ENCODE measurements at regions of chr12 and their contacts with region 1.

Region 1: GRCh38 chr12:60014436-60014835 is 418.6 kb downstream of the SLC16A7 start:
- DNase-seq: no peak
- ATAC-seq: no peak
- H3K4me3 ChIP-seq: no peak overlapping the region
- H3K27ac ChIP-seq: no peak overlapping the region
- H3K4me1 ChIP-seq: no peaks in the 10 kb centered on the region
- H3K27me3 ChIP-seq: no peaks in the 10 kb centered on the region
- CTCF ChIP-seq: no peak
- POLR2A ChIP-seq: no peak

Region 2: DNA sequence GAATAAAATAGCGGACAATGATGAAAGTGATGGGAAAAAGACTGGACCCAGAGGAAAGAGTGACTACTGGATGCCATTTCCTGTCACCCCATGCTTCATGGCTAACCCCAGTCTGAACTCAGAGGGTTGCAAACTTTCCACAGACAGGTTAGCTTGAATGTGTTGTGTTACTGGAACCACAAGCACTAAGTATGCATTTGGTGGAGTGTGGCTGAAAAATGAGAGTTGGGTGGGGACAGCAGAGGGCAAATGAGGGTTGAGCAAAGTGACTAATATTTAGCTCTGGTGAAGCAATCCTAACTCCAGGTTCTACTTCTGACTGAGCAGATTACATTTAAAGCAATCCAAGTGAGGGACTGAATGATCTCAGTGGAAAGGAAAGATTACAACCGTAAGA is 417.1 kb before region 1 on chr12:
- intact Hi-C with region 1: no loop called
- DNase-seq: peak in 3 of 5 donors; percentile 28 to 43 (median 33)
- ATAC-seq: peak; percentile 55 to 71 (median 62)
- H3K4me3 ChIP-seq: peak overlapping the region in 11 of 12 donors; percentile 16 to 87 (median 69)
- H3K27ac ChIP-seq: peak overlapping the region; percentile 80 to 98 (median 97)
- H3K4me1 ChIP-seq: peaks cover 0 to 49% (median 21%) of the 10 kb centered on the region in 12 donors
- H3K27me3 ChIP-seq: no peaks in the 10 kb centered on the region
- CTCF ChIP-seq: peak in 1 of 12 donors; percentile 16
- POLR2A ChIP-seq: no peak

Region 3: DNA sequence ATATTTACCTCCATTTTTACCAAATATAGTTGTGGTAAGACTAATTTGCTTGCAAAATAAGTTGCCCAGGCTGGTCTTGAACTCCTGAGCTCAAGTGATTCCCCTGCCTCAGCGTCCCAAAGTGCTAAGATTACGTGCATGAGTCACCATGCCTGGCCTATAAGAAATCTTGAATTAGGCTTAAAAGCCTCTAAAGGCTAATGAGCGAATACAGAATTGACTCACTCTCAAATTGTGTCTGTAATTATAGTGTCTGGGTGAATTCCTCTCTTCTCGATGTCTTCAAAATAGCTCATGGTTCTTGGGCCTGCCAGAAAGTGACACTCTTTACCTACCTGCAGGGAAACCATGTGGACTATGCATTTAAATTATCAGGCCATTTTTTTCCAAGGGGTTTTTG is 15.1 kb before region 1 on chr12:
- intact Hi-C with region 1: loop called in 1 of 10 experiments (anchors 2 kb)
- DNase-seq: no peak
- ATAC-seq: no peak
- H3K4me3 ChIP-seq: no peak overlapping the region
- H3K27ac ChIP-seq: no peak overlapping the region
- H3K4me1 ChIP-seq: no peaks in the 10 kb centered on the region
- H3K27me3 ChIP-seq: no peaks in the 10 kb centered on the region
- CTCF ChIP-seq: no peak
- POLR2A ChIP-seq: no peak